PC-9 (cell line): ENCODE measurements at regions of chr2 and their contacts with region 1.

Region 1: DNA sequence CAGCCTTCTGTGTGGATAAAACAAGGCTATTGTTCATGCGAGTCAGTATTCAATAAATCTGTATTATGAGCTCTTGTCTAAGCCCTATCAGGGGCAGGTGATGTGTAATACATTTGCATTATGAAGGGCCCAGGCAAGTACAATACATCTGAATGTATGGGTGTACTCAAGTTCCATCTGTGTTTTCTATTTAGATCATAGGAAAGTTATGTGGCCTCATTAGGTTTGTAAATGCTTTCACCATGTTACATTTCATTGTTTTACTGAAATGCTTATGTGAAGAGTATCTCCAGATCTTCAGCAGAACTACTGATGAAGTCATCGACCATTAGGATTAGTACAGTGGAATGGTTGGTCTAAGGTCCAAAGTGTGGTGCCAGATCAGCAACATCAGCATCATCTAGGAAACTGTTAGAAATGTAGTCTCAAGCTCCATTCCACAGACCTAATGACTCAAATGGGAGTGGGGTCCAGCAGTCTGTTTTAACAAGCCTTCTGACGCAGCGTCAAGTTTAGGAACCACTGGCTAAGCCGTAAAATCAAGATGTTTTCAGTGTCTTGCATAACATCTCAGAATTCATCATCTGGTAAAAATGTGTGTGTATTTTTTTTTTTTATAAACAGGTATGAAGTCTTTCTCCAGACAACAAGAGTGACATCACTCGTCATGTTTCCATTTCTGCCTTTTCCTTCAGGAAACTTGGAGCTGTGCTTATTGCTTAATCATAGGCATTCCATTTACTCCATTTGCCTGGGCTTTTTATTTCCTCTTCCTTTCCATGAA is 80.5 kb downstream of the LYPD6 start:
- DNase-seq: peak; percentile 23 to 65
- H3K4me3 ChIP-seq: no peak overlapping the region
- H3K27ac ChIP-seq: no peak overlapping the region
- H3K4me1 ChIP-seq: peaks cover 8% of the 10 kb centered on the region; the same call in 1 of the 2 replicates
- H3K27me3 ChIP-seq: no peaks in the 10 kb centered on the region
- CTCF ChIP-seq: no peak

Region 2: DNA sequence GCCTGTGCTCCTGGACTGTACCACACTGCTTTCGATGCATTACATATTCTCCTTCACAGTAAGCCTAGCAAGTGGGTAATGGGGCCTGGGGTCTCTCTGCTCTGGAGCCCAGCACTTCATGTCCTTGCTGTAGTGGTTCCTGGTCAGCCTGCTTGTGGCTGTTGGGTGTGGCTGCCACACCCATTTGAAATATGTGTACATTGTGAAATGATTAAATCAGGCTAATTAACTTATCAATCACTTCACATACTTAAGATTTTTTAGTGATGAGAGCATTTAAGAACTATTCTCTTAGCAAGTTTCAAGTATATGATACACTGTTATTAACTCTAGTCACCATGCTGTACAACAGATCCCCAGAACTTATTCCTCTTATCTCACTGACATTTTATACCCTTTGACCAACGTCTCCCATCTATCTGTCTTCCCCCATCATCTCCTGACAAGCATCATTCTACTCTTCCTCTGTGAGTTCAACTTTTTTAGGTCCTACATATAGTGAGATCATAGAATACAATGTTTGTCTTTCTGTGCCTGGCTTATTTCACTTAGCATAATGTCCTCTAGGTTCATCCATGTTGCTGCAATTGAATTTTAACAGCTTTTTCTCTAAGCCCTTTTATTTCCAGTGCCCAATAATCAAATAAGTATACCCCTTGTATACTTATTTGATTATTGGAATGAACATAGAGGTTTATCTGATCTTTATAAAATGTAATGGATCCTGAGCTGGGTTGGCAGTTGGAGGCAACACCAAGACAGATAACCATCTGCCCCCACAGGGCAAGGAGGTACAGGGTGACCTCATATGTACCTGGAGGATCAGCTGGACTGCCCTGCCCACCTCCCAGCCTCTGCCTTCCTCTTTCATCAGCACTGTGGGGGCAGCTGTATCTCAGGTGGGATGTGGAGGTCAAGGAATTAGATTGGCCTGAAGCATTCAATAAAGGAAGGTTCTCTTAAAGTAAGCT is 11.7 kb after region 1 on chr2:
- CTCF ChIA-PET with region 1: no interaction called
- POLR2A ChIA-PET with region 1: no interaction called
- intact Hi-C with region 1: loop called (anchors 1 kb)
- DNase-seq: peak; percentile 57 to 87
- H3K4me3 ChIP-seq: no peak overlapping the region
- H3K27ac ChIP-seq: peak overlapping the region; percentile 70
- H3K4me1 ChIP-seq: peaks cover 27% of the 10 kb centered on the region
- H3K27me3 ChIP-seq: no peaks in the 10 kb centered on the region
- CTCF ChIP-seq: no peak